HCT116 (cell line): ENCODE measurements at regions of chr11 and their contacts with region 1.

Region 1: GRCh38 chr11:127098684-127099083 is 98.1 kb upstream of the KIRREL3 start:
- DNase-seq: no peak
- ATAC-seq: no peak
- H3K4me3 ChIP-seq: no peak overlapping the region
- H3K27ac ChIP-seq: no peak overlapping the region
- H3K4me1 ChIP-seq: no peaks in the 10 kb centered on the region
- H3K27me3 ChIP-seq: no peaks in the 10 kb centered on the region
- CTCF ChIP-seq: no peak
- POLR2A ChIP-seq: no peak
- RAD21 ChIP-seq: no peak

Region 2: DNA sequence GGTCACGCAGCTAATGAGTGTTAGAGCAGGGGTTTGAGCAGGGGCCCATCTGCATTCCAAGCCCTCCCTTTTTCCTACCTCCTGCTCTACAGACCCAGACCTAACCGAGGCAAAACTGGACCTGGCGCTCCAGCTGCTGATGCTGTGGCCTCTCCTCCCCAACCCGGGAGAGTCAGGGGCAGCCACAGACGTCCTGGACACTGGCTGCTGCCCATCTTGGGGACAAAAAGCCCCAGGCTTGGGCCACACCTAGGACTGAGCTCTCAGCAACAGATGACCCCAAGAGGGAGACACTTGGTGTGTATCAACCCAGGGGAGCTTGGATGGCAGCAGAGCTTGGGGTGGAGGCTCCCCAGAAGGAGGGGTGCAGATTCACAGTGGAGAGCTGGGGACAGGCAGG is 570.6 kb before region 1 on chr11:
- CTCF ChIA-PET with region 1: no interaction called
- POLR2A ChIA-PET with region 1: no interaction called
- RAD21 ChIA-PET with region 1: no interaction called
- intact Hi-C with region 1: no loop called
- DNase-seq: no peak
- ATAC-seq: no peak
- H3K4me3 ChIP-seq: no peak overlapping the region
- H3K27ac ChIP-seq: no peak overlapping the region
- H3K4me1 ChIP-seq: no peaks in the 10 kb centered on the region
- H3K27me3 ChIP-seq: peaks cover 41% of the 10 kb centered on the region
- CTCF ChIP-seq: no peak
- POLR2A ChIP-seq: no peak
- RAD21 ChIP-seq: no peak

Region 3: DNA sequence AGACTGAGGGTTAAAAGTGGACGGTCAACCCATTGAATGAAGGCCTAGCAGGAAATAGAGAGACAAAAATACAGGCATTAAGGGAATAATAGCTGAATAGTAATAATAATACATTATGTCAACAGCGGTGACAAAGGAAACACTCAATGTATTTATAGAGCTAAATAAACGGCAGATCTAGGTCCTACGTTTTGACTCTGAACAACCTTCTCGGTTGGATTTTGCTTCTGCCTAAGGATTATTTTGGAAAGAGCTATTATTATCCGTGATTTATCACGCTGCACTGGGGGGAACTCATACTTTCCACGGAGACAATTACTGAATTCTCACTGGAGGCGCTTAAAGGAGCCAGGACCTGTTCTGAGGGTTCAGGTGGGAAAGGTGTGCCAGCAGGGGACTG is 20.1 kb after region 1 on chr11:
- CTCF ChIA-PET with region 1: no interaction called
- POLR2A ChIA-PET with region 1: no interaction called
- RAD21 ChIA-PET with region 1: no interaction called
- intact Hi-C with region 1: loop called (anchors 1 kb)
- DNase-seq: no peak
- ATAC-seq: no peak
- H3K4me3 ChIP-seq: no peak overlapping the region
- H3K27ac ChIP-seq: no peak overlapping the region
- H3K4me1 ChIP-seq: no peaks in the 10 kb centered on the region
- H3K27me3 ChIP-seq: no peaks in the 10 kb centered on the region
- CTCF ChIP-seq: no peak
- POLR2A ChIP-seq: no peak
- RAD21 ChIP-seq: no peak

Region 4: GRCh38 chr11:127288926-127289325 is 190.2 kb after region 1 on chr11:
- CTCF ChIA-PET with region 1: no interaction called
- POLR2A ChIA-PET with region 1: no interaction called
- RAD21 ChIA-PET with region 1: no interaction called
- intact Hi-C with region 1: no loop called
- DNase-seq: no peak
- ATAC-seq: no peak
- H3K4me3 ChIP-seq: no peak overlapping the region
- H3K27ac ChIP-seq: no peak overlapping the region
- H3K4me1 ChIP-seq: no peaks in the 10 kb centered on the region
- H3K27me3 ChIP-seq: no peaks in the 10 kb centered on the region
- CTCF ChIP-seq: no peak
- POLR2A ChIP-seq: no peak
- RAD21 ChIP-seq: no peak